ENCODE measurements at regions of chr16 and their contacts with region 1.

Region 1: DNA sequence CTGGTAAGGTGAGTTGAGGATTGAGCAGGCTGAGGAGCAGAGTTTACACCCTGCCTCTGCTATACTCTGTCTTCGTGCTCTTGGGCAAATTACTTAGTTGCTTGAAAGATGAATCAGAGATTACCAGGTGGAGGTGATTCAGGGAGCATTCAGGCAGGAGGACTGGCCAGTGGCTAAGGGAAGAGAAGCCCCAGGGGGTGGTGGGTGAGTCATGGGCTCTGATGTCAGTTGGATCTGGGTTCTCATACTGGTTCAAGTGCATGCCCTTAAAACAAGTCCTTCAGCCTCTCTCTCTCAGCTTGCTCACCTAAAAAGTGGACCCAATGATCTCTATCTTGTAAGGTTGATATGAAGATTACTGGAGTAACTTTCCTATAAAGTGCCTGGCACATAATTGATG is 28.4 kb upstream of the BRD7 start:
- ATAC-seq: peak in 2 of 8 experiments; percentile 76 to 79
- H3K4me3 ChIP-seq: no peak overlapping the region
- H3K27ac ChIP-seq: no peak overlapping the region
- H3K4me1 ChIP-seq: peaks cover 4 to 5% of the 10 kb centered on the region in 2 donors

Region 2: GRCh38 chr16:50497592-50497991 is 100.4 kb after region 1 on chr16:
- in situ Hi-C with region 1: loop called in 1 of 9 experiments (anchors 25 kb)
- ATAC-seq: no peak
- H3K4me3 ChIP-seq: no peak overlapping the region
- H3K27ac ChIP-seq: no peak overlapping the region
- H3K4me1 ChIP-seq: no peaks in the 10 kb centered on the region

Region 3: DNA sequence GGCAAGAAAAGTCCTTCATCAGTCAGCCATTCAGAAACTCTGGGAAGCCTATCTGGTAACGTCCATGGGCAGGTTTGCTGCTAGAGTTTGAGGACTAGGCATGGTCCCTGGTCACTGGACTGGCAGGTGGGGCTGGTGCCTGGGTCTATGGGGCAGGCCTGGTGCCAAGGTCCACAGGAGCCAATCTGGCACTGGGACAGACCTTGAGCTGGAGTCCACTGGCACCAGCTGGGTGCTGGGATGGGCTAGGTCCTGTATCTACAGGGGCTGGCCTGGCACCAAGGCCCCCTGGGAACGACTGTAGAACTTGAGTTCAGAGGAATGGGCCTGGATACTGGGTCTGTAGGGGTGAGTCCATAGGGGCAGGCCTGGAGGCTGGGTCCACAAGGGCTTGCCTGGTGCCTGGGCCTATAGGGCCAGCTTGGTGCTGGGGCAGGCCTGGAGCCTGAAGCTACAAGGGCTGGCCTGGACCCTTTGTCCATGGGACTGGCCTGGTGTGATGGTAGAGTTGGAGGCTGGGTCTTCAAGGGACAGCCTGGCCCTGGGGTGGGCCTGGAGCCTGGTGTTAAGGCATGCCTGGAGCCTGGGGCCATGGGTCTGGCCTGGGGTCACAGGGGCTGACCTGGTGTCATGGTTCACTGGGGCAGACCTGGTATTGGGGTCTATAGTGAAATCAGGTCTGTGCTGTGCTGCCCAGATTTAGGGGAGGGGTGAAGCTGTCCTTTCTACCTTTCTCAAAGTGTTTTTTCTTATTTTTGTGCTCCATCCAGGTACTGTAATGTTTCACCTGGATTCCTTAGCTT is 120.5 kb after region 1 on chr16:
- in situ Hi-C with region 1: no loop called
- ATAC-seq: no peak
- H3K4me3 ChIP-seq: no peak overlapping the region
- H3K27ac ChIP-seq: no peak overlapping the region
- H3K4me1 ChIP-seq: peaks cover 0 to 2% of the 10 kb centered on the region in 2 donors

Region 4: DNA sequence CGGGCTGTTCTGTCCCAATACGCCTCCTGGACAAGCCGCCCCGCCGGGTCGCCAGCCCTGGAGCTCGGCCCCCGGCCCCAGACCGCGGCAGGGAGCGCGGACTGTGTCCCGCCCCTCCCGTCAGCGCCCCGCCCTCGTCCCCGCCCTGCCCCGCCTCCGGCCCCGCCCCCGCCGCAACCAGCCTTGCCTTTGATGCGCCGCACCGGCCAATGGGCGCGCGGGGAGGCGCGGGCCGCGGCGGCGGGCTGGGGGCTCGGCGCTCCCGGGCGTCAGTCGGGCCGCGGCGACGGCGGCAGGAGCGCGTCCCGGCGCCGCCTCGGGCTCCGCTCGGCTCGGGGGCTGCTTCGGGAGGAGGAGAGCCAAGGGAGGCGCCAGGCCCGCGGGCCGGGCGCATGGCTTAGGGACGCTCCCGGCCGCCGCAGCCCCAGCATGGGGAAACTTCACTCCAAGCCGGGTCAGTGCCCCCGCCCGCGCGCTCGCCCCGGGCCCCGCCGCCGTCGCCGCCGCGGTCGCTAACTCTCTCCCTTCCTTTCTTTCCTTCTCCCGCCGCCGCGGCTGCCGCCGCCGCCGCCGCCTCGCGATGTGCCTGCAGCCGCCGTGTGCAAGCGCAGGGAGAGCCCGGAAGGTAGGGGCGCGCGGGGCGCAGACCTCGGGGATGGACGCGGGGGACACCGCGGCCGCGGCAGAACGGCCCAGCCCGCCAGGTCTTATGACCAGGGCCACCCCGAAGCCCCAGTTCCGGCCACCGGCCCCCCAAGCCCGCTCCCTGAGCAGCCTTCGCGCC is 151.1 kb after region 1 on chr16 and contains the start of gene NKD1:
- in situ Hi-C with region 1: loop called in 1 of 9 experiments (anchors 25 kb)
- ATAC-seq: peak; percentile 71 to 90 (median 86)
- H3K4me3 ChIP-seq: peak within 1 kb of the TSS; percentile 51 to 87 (median 61)
- H3K27ac ChIP-seq: no peak within 1 kb of the TSS
- H3K4me1 ChIP-seq: peaks cover 0 to 24% of the 10 kb centered on the region in 2 donors
- total RNA-seq, gene NKD1: 0.13 to 20.0 (median 1.2) TPM

Region 5: GRCh38 chr16:50665128-50665878 is 268.1 kb after region 1 on chr16:
- in situ Hi-C with region 1: loop called in 4 of 9 experiments (anchors 25 kb)
- ATAC-seq: peak; percentile 57 to 97 (median 75)
- H3K4me3 ChIP-seq: no peak overlapping the region
- H3K27ac ChIP-seq: no peak overlapping the region
- H3K4me1 ChIP-seq: peaks cover 0 to 9% of the 10 kb centered on the region in 2 donors

Region 6: GRCh38 chr16:51119556-51119955 is 722.4 kb after region 1 on chr16:
- in situ Hi-C with region 1: no loop called
- ATAC-seq: peak in 5 of 8 experiments; percentile 73 to 86 (median 77)
- H3K4me3 ChIP-seq: no peak overlapping the region
- H3K27ac ChIP-seq: no peak overlapping the region
- H3K4me1 ChIP-seq: peaks cover 28 to 31% of the 10 kb centered on the region in 2 donors

Measured in motor neuron (in vitro differentiated cells).